CD4-positive, alpha-beta T cell (primary cell): ENCODE measurements at regions of chr1 and their contacts with region 1.

Region 1: DNA sequence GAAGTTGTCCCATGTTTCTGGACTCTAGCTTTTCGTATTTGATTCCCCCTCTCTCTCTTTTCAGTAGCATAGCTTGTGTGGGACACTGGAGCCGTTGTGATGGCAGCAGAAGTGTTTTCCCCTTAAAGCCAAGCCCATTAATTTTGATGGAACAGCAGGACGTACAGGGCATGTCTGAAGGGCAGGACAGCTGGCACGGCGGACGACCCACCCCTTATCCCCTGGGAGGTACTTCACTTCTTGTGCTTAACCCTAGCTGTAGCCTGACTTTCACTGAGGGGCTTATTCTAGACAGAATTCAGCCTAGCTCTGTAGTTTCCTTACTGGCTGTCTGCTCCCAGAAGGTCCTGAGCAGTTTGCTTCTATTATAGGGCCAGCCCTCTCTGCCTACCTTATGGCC is 8.6 kb upstream of the PPFIA4 start:
- DNase-seq: no peak
- ATAC-seq: no peak
- H3K4me3 ChIP-seq: no peak overlapping the region
- H3K4me3 Mint-ChIP-seq: no peak overlapping the region
- H3K27ac ChIP-seq: no peak overlapping the region
- H3K27ac Mint-ChIP-seq: no peak overlapping the region
- H3K4me1 ChIP-seq: no peaks in the 10 kb centered on the region
- H3K4me1 Mint-ChIP-seq: peaks cover 7% of the 10 kb centered on the region
- H3K27me3 ChIP-seq: no peaks in the 10 kb centered on the region
- H3K27me3 Mint-ChIP-seq: no peaks in the 10 kb centered on the region
- CTCF ChIP-seq: no peak

Region 2: DNA sequence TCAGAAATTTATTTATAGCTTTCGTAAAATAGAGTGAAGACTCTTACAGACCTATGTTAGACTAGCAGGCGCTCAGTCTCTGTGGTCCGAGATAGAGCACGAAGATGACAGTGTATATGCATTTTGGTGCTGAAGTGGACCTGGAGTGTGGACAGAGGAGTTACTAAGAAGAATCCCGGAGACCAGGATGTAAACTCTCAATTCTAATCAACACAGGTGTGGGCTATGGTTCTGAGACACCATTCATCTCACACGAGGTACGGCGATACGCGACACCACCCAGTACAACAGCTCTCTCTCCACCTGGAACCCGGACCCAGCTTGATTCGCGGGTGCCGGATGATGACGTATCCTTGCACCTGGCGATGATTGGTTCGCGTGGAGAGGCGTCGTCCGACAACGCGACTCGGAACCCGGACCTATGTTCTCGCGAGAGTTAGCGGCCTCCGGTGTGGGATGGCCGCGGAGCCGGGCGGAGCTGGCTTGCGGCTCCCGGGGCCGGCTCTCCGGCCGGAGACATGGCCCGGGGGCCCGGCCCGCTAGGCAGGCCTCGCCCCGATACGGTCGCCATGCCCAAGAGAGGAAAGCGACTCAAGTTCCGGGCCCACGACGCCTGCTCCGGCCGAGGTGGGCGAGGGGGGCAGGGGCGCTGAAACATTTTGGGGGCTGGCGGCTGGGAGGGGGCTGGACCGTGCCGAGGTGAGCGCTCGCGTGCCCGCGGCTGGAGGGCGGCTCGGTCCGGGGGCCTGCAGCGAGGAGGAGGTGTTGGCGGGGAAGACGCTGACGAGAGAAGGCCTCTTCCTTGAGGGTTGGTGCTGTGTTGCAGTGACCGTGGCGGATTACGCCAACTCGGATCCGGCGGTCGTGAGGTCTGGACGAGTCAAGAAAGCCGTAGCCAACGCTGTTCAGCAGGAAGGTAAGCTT is 10.5 kb before region 1 on chr1 and contains the start of gene TMEM183A:
- CTCF ChIA-PET with region 1: no interaction called
- POLR2A ChIA-PET with region 1: interaction called, 12 read pairs
- intact Hi-C with region 1: no loop called
- DNase-seq: peak; percentile 88 to 98 (median 92)
- ATAC-seq: peak; percentile 94
- H3K4me3 ChIP-seq: peak within 1 kb of the TSS; percentile 71
- H3K4me3 Mint-ChIP-seq: peak within 1 kb of the TSS; percentile 99
- H3K27ac ChIP-seq: peak within 1 kb of the TSS; percentile 71 to 96
- H3K27ac Mint-ChIP-seq: peak within 1 kb of the TSS; percentile 95
- H3K4me1 ChIP-seq: peaks cover 19% of the 10 kb centered on the region
- H3K4me1 Mint-ChIP-seq: peaks cover 35% of the 10 kb centered on the region
- H3K27me3 ChIP-seq: no peaks in the 10 kb centered on the region
- H3K27me3 Mint-ChIP-seq: no peaks in the 10 kb centered on the region
- CTCF ChIP-seq: no peak
- total RNA-seq, gene TMEM183A: 187 to 194 TPM